HCT116 (cell line): ENCODE measurements at regions of chr12 and their contacts with region 1.

Region 1: DNA sequence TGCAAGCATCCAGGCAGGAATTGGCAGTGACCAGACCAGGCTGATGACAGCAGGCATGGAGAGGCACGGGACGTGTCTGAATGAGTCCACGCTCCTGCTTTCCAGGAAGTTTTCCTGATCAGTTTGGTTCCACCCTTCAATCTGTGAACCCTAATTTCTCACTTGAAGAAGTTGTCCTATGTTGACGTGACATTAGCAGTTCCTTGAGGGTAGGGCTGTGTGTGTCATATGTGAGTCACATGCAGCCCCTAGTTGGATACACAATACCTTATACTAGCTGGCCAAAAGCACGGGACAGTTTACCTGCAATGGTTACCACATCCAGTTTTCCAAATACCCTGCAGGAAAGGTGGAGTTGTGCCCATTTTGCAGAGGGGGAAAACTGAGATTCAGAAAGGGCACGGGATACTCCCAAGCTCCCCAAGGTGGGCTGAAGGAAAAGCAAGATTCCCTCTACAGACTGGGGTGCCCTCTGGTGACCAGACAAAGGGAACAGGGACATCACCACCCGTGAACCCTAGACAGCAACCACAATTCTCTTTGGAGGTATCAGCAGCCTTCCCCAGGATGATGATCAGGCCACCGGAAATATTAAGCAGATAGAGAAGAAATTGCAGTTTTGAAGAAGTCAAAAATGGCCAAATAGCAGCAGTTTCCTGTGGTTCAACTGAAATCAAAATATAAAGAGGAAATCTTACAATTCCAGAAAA is 194.5 kb downstream of the PHETA1 start:
- DNase-seq: peak; percentile 4
- ATAC-seq: peak; percentile 77
- H3K4me3 ChIP-seq: no peak overlapping the region
- H3K27ac ChIP-seq: no peak overlapping the region
- H3K4me1 ChIP-seq: no peaks in the 10 kb centered on the region
- H3K27me3 ChIP-seq: peaks cover 44% of the 10 kb centered on the region
- CTCF ChIP-seq: peak; percentile 27 to 45 (median 35); a peak in 4 of 6 replicates
- POLR2A ChIP-seq: no peak
- RAD21 ChIP-seq: peak; percentile 67

Region 2: DNA sequence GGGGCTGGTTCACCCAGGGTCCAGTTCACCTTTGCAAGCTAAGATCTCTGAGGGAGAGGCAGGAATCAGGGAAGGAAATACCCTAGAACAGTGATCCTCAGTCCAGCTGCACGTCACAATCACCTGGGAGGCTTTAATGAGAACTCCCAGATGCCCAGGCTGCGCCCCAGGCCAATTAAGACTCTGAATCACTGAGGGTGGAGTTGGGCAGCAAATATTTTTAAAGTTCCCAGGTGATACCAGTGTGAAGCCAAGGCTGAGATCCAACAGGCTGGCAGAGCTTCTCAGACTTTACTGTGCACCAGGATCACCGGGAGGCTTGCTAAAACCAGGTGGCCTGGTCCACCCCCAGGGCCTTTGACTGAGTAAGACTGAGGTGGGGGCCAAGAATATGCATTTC is 277.8 kb before region 1 on chr12:
- CTCF ChIA-PET with region 1: no interaction called
- POLR2A ChIA-PET with region 1: no interaction called
- RAD21 ChIA-PET with region 1: no interaction called
- intact Hi-C with region 1: loop called (anchors 10 kb)
- DNase-seq: no peak
- ATAC-seq: no peak
- H3K4me3 ChIP-seq: no peak overlapping the region
- H3K27ac ChIP-seq: no peak overlapping the region
- H3K4me1 ChIP-seq: peaks cover 0 to 37% of the 10 kb centered on the region in 2 experiments; a peak in 2 of 4 replicates
- H3K27me3 ChIP-seq: no peaks in the 10 kb centered on the region
- CTCF ChIP-seq: no peak
- POLR2A ChIP-seq: no peak
- RAD21 ChIP-seq: no peak

Region 3: DNA sequence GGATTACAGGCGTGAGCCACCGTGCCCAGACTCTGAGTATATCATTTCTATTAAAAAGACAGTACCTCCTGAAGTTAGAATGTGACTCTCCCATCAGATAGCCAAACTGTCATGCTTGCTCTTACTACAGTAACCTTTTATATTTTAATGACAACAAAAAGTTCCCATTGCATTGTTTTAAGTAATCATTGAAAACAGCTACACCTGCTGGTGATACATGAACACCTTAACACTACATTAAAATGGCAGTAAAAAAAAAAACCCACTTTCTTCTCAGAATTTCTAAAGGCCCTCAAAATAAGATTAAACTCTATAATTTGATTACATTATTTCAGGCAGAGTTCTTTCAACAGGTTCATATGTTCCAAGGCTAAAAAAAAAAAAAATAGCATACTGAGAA is 308.1 kb after region 1 on chr12:
- CTCF ChIA-PET with region 1: no interaction called
- POLR2A ChIA-PET with region 1: no interaction called
- RAD21 ChIA-PET with region 1: no interaction called
- intact Hi-C with region 1: no loop called
- DNase-seq: no peak
- ATAC-seq: peak; percentile 46; the same call in 1 of the 2 replicates
- H3K4me3 ChIP-seq: no peak overlapping the region
- H3K27ac ChIP-seq: no peak overlapping the region
- H3K4me1 ChIP-seq: no peaks in the 10 kb centered on the region
- H3K27me3 ChIP-seq: no peaks in the 10 kb centered on the region
- CTCF ChIP-seq: peak; percentile 10 to 47 (median 21); a peak in 2 of 6 replicates
- POLR2A ChIP-seq: no peak
- RAD21 ChIP-seq: peak; percentile 22; the same call in 1 of the 2 replicates